A549 (cell line): ENCODE measurements at regions of chr12 and their contacts with region 1.

Region 1: DNA sequence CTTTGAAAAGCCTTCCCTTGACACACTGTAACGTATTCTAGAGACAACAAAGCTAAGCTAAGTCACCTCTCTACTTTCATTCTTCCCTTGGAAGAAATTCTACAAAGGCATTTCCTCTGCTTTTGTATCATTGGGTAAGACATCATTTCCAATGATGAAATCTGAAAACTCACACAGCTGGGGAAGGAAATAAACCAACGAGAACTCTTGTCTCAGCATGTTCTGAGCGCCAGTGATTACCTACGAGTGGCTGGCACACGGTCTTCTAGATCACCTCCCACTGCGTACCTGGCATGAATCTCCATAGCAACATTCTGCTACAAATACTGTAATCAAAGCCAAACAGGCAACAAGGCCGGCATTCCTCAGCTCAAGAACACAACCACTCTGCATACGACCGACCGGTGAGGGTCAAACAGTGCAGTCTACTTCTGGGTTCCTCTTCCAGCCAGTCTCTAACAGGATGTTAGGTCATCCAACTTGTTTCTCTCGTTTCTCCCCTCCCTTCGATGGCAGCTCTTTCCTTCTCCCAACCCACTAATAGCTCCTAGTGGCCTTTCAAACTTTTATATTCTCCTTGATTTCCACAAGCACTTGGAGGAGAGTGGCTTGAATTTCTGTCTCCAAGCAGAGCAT is 7.6 kb downstream of the VPS37B start:
- DNase-seq: peak; percentile 74 to 84
- ATAC-seq: peak; percentile 72 to 84
- H3K4me3 ChIP-seq: 0 out of 3 replicates have a peak overlapping the region, but pooled peaks have one; percentile 12
- H3K27ac ChIP-seq: peak overlapping the region; percentile 42 to 84
- H3K4me1 ChIP-seq: peaks cover 79% of the 10 kb centered on the region
- CTCF ChIP-seq: no peak
- EP300 ChIP-seq: no peak
- POLR2A ChIP-seq: no peak
- RAD21 ChIP-seq: no peak

Region 2: GRCh38 chr12:122333142-122334087 is 554.9 kb before region 1 on chr12:
- CTCF ChIA-PET with region 1: no interaction called
- POLR2A ChIA-PET with region 1: no interaction called
- DNase-seq: no peak
- ATAC-seq: peak in 1 of 2 experiments; percentile 54; a peak in 1 of 6 replicates
- H3K4me3 ChIP-seq: no peak overlapping the region
- H3K27ac ChIP-seq: no peak overlapping the region
- H3K4me1 ChIP-seq: no peaks in the 10 kb centered on the region; the same call in 2 of the 3 replicates
- CTCF ChIP-seq: no peak
- EP300 ChIP-seq: no peak
- POLR2A ChIP-seq: no peak
- RAD21 ChIP-seq: no peak

Region 3: GRCh38 chr12:122726080-122726558 is 162.2 kb before region 1 on chr12:
- CTCF ChIA-PET with region 1: no interaction called
- POLR2A ChIA-PET with region 1: no interaction called
- DNase-seq: peak in 1 of 2 experiments; percentile 24
- ATAC-seq: peak in 1 of 2 experiments; percentile 19; a peak in 1 of 6 replicates
- H3K4me3 ChIP-seq: no peak overlapping the region
- H3K27ac ChIP-seq: peak overlapping the region in 1 of 2 experiments; percentile 25; a peak in 2 of 6 replicates
- H3K4me1 ChIP-seq: peaks cover 10% of the 10 kb centered on the region
- CTCF ChIP-seq: no peak
- EP300 ChIP-seq: no peak
- POLR2A ChIP-seq: no peak
- RAD21 ChIP-seq: no peak

Region 4: DNA sequence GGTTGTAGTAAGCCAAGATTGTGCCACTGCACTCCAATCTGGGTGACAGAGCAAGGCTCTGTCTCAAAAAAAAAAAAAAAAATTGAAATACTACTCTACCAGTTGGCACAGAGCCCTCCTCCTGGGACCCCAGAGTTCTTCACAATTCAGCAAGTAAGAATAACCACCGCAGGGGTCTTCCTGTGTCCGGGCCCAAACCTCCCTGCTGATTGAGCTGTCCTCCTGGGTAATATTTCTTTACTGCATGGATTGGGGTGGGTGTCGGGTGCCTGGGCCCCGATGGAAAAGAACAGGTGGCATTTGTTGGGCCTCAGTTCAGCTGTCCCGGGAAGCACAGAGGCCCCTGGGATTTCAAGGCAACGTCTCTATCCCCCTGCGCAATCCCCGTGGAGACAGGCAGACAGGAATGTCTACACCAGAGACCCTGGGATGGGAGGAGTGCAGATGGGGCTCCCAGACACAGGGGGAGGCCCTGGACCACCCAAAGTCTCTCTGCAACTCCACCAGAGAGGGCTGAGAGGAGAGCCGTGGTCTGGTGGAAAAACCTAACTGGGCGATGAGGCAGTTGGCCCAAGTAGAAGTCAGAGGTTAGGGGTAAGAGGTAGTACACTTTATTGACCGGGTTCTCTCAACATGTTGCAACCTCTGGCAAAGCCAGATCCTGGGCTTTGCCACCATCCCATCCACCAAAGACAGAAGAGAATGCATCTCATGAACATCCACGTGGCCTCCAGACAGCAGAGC is 40.2 kb after region 1 on chr12:
- CTCF ChIA-PET with region 1: no interaction called
- POLR2A ChIA-PET with region 1: no interaction called
- DNase-seq: no peak
- ATAC-seq: no peak
- H3K4me3 ChIP-seq: no peak overlapping the region
- H3K27ac ChIP-seq: no peak overlapping the region
- H3K4me1 ChIP-seq: 0 out of 3 replicates have a peak, but pooled peaks cover 3% of the 10 kb centered on the region
- CTCF ChIP-seq: no peak
- EP300 ChIP-seq: no peak
- POLR2A ChIP-seq: no peak
- RAD21 ChIP-seq: no peak

Region 5: GRCh38 chr12:122946690-122947341 is 58.5 kb after region 1 on chr12:
- CTCF ChIA-PET with region 1: interaction called, 103 read pairs
- POLR2A ChIA-PET with region 1: no interaction called
- DNase-seq: peak; percentile 92 to 96
- ATAC-seq: peak; percentile 86 to 88
- H3K4me3 ChIP-seq: no peak overlapping the region
- H3K27ac ChIP-seq: peak overlapping the region; percentile 76 to 87
- H3K4me1 ChIP-seq: peaks cover 68% of the 10 kb centered on the region
- CTCF ChIP-seq: 0 out of 3 replicates have a peak, but pooled peaks have one; percentile 16
- EP300 ChIP-seq: peak; percentile 22 to 39; a peak in 2 of 5 replicates
- POLR2A ChIP-seq: no peak
- RAD21 ChIP-seq: peak; percentile 11 to 32; a peak in 2 of 5 replicates

Region 6: GRCh38 chr12:122951979-122952892 is 63.9 kb after region 1 on chr12:
- CTCF ChIA-PET with region 1: interaction called, 103 read pairs
- POLR2A ChIA-PET with region 1: no interaction called
- DNase-seq: peak; percentile 79 to 87
- ATAC-seq: peak; percentile 95 to 98
- H3K4me3 ChIP-seq: no peak overlapping the region
- H3K27ac ChIP-seq: peak overlapping the region; percentile 57 to 72; a peak in 5 of 6 replicates
- H3K4me1 ChIP-seq: peaks cover 25% of the 10 kb centered on the region
- CTCF ChIP-seq: peak; percentile 93
- EP300 ChIP-seq: no peak
- POLR2A ChIP-seq: no peak
- RAD21 ChIP-seq: peak; percentile 97 to 99